ENCODE measurements at regions of chr2 and their contacts with region 1.

Region 1: DNA sequence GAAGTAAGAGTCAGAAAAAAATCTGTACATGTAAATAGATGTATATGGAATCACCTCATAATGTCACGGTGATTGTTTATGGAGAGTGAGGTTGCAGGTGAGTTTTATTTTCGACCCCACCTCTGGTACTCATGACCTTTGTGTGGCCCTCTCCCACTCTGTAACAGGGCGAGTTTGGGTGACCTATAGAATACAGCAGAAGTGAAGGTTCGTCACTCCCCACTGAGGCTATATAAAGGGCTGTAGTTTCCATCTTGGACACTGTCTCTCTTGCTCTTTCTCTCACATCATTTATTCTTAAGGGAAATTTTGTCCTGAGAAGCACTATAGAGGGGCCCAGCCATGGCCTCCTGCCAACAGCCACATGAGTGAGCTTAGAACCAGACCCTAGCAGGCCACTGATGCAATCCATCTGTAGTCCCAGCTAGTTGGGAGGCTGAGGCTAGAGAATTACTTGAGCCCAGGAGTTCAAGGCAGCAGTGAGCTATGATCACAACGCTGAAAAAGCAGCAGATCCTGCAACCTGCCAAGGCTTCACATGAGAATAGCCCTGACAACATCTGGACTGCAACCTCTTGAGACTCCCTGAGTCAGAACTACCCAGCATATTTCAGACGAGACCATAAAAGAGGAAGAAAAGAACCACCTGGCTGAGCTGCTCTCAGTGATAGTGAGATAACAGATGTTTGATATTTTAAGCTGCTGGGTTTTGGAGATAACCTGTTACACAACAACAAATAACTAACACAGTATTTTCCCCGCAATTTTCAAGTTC is 74.3 kb upstream of the SLC1A4 start:
- DNase-seq: no peak
- ATAC-seq: no peak
- H3K4me3 Mint-ChIP-seq: no peak overlapping the region
- H3K27ac Mint-ChIP-seq: no peak overlapping the region
- H3K4me1 Mint-ChIP-seq: peaks cover 19% of the 10 kb centered on the region
- H3K27me3 Mint-ChIP-seq: no peaks in the 10 kb centered on the region

Region 2: GRCh38 chr2:64720535-64721327 is 194.2 kb before region 1 on chr2:
- CTCF ChIA-PET with region 1: no interaction called
- POLR2A ChIA-PET with region 1: no interaction called
- intact Hi-C with region 1: no loop called
- DNase-seq: no peak
- ATAC-seq: peak; percentile 36
- H3K4me3 Mint-ChIP-seq: peak overlapping the region; percentile 30
- H3K27ac Mint-ChIP-seq: no peak overlapping the region
- H3K4me1 Mint-ChIP-seq: peaks cover 9% of the 10 kb centered on the region
- H3K27me3 Mint-ChIP-seq: no peaks in the 10 kb centered on the region

Region 3: GRCh38 chr2:64819774-64820696 is 94.9 kb before region 1 on chr2:
- CTCF ChIA-PET with region 1: no interaction called
- POLR2A ChIA-PET with region 1: no interaction called
- intact Hi-C with region 1: no loop called
- DNase-seq: peak; percentile 75
- ATAC-seq: peak; percentile 98
- H3K4me3 Mint-ChIP-seq: peak overlapping the region; percentile 35
- H3K27ac Mint-ChIP-seq: peak overlapping the region; percentile 92
- H3K4me1 Mint-ChIP-seq: peaks cover 23% of the 10 kb centered on the region
- H3K27me3 Mint-ChIP-seq: no peaks in the 10 kb centered on the region

Region 4: DNA sequence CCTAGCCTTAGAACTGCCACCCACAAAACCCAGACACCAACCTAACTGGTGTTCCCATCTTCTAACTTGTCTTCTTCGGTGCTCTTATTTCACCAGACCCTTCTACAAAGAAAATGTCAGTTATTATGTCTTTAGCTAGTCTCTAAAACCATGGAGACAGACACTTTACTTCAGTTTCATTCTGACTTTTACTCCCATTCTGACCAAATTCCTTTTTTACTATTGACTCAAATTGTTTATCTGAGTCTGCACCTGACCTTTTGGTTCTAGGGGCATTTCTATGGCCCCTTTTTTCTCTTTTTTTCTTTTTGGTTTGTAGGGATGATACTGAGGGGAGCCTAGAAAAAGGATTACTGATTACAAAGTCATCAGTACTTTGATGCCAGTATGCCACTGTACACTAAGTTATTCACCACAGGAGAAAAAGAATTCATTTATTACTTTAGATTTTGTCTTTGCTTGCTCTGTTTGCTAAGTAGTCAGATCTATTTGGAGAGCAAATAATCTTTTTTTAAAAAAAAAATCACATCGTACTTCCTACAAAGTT is 67.5 kb after region 1 on chr2:
- CTCF ChIA-PET with region 1: interaction called, 10 read pairs
- POLR2A ChIA-PET with region 1: no interaction called
- intact Hi-C with region 1: no loop called
- DNase-seq: peak; percentile 31
- ATAC-seq: peak; percentile 81
- H3K4me3 Mint-ChIP-seq: no peak overlapping the region
- H3K27ac Mint-ChIP-seq: peak overlapping the region; percentile 52
- H3K4me1 Mint-ChIP-seq: peaks cover 30% of the 10 kb centered on the region
- H3K27me3 Mint-ChIP-seq: no peaks in the 10 kb centered on the region

Region 5: DNA sequence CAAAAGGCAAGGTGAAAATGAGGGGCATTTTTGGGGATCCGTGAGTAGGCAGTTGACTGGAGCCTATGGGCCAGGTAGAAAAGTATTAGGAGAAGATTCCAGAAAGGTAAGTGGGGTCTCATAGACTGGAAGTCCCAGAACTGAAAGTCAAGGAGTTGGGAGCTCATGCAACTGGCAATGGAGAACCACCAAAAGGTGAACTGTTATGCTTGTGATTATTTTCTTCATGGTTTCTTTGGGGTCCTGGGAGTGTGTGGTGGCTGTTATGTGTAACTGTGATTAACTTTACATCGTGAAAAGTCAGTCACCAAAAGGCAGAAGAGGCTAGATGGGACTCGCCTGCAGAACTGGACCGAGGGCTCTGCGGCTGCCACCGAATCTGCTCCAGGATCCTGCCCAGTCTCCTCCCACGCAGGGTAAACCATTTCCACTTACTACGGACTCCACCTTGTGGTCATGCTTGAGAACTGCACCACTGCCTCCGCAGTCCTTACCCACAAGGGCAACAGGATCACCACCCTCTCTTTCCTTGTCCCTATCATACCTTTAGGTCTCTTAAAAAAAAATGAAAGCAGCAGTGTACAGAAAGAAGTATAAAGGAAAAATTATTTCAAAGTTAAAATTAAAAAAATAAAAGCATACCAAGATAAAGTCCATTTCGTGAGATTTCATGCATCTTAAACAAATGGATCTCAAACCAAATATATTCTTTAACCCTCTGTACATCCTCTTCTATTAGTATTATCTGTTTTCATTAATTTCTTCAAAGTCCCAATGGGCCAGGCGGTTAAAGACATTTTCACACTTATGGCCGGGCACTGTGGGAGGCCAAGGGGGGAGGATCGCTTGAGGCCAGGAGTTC is 125.7 kb after region 1 on chr2:
- CTCF ChIA-PET with region 1: interaction called, 42 read pairs
- POLR2A ChIA-PET with region 1: no interaction called
- intact Hi-C with region 1: loop called (anchors 1 kb)
- DNase-seq: peak; percentile 85
- ATAC-seq: peak; percentile 83
- H3K4me3 Mint-ChIP-seq: no peak overlapping the region
- H3K27ac Mint-ChIP-seq: peak overlapping the region; percentile 33
- H3K4me1 Mint-ChIP-seq: peaks cover 7% of the 10 kb centered on the region
- H3K27me3 Mint-ChIP-seq: no peaks in the 10 kb centered on the region

Region 6: GRCh38 chr2:65056215-65057053 is 141.5 kb after region 1 on chr2 and contains the start of gene CEP68:
- CTCF ChIA-PET with region 1: interaction called, 8 read pairs
- POLR2A ChIA-PET with region 1: no interaction called
- intact Hi-C with region 1: loop called in 1 of 2 experiments (anchors 1 kb)
- DNase-seq: peak; percentile 98
- ATAC-seq: peak; percentile 94
- H3K4me3 Mint-ChIP-seq: peak within 1 kb of the TSS; percentile 93
- H3K27ac Mint-ChIP-seq: peak within 1 kb of the TSS; percentile 84
- H3K4me1 Mint-ChIP-seq: peaks cover 55% of the 10 kb centered on the region
- H3K27me3 Mint-ChIP-seq: no peaks in the 10 kb centered on the region
- total RNA-seq, gene CEP68: 4.9 to 6.0 TPM

Region 7: DNA sequence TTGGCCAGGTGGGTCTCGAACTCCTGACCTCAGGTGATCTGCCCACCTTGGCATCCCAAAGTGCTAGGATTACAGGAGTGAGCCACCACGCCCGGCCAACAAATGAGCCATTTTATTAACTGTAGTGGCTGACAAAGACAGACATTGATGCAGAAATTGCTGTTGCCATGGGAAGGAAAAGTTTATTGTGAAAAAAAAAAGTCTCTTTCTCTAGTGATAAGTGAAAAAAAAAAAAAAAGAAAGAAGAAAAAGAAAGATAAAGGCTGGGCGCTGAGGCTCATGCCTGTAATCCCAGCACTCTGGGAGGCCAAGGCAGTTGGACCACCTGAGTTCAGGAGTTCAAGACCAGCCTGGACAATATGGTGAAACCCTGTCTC is 254.8 kb after region 1 on chr2:
- CTCF ChIA-PET with region 1: interaction called, 5 read pairs
- POLR2A ChIA-PET with region 1: no interaction called
- intact Hi-C with region 1: loop called (anchors 1 kb)
- DNase-seq: no peak
- ATAC-seq: no peak
- H3K4me3 Mint-ChIP-seq: no peak overlapping the region
- H3K27ac Mint-ChIP-seq: no peak overlapping the region
- H3K4me1 Mint-ChIP-seq: no peaks in the 10 kb centered on the region
- H3K27me3 Mint-ChIP-seq: no peaks in the 10 kb centered on the region

Region 8: DNA sequence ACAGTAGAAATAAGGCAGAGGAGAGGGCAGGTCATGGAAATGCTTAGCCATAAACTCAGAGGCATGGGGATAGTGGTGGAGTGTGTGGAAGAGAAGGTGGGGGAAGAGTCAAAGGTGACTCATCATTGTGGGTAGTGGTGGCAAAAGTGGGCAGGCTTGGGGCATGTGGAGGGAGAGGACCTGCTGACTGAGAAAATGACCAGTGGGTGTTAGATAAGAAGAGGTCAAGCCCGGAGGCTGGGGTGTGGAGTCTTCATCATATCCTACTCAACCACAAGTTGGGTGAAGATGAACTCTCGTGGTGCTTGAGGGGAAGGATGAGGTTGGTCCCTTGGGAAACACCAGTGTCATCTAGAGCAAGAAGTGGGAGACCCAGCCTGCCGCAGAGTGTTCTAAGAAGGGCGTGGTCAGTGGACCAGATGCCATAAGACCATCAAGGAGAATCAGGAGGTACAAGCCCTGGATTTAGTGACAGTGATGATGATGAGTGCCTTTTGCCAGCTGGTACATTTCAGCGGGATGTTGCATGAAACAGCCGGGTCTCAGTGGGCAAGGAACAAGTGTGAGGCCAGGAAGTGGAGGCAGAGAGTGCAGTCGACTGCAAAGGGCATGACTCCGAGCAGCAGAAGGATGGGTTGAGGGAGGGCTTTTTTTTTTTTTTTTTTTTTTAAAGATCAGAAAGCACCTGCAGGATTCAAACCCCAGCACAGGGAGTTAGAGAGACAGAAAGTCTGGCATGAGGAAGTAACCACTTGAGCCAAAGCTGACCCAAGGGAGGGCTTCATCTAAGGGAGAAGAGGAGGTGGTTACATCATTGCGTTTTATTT is 640.1 kb after region 1 on chr2:
- CTCF ChIA-PET with region 1: no interaction called
- POLR2A ChIA-PET with region 1: no interaction called
- intact Hi-C with region 1: loop called in 1 of 2 experiments (anchors 5 kb)
- DNase-seq: peak; percentile 41
- ATAC-seq: peak; percentile 65
- H3K4me3 Mint-ChIP-seq: no peak overlapping the region
- H3K27ac Mint-ChIP-seq: peak overlapping the region; percentile 12
- H3K4me1 Mint-ChIP-seq: peaks cover 15% of the 10 kb centered on the region
- H3K27me3 Mint-ChIP-seq: peaks cover 8% of the 10 kb centered on the region

Measured in activated CD4-positive, alpha-beta T cell treated with anti-CD3 and anti-CD28 coated beads for 36 hours (primary cell).